ENCODE measurements at regions of chr1 and their contacts with region 1.

Region 1: DNA sequence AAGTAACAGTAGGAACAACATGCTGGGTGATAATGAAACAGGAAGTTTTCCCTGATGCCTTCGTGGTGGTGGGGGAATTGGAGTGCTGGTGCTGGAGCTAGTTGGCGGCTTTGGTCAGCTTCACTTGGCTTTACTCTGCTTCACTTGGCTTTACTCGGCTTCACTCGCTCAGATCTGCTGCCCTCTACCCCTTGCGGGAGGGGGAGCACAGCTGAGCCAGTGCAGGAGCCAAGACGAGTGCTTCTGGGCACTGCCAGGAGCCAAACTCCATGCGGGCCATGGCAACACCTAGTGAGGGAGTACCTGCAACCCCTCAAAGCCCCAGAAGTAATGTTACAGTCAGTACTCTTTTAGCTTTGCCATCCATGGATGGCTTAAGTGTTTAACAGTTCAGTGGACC is 10.6 kb upstream of the PRKACB start:
- DNase-seq: no peak
- ATAC-seq: no peak; the same call in 2 of the 3 replicates
- H3K4me3 ChIP-seq: no peak overlapping the region
- H3K27ac ChIP-seq: no peak overlapping the region
- H3K4me1 ChIP-seq: no peaks in the 10 kb centered on the region
- H3K27me3 ChIP-seq: no peaks in the 10 kb centered on the region
- CTCF ChIP-seq: no peak
- EP300 ChIP-seq: no peak
- POLR2A ChIP-seq: no peak
- RAD21 ChIP-seq: no peak

Region 2: DNA sequence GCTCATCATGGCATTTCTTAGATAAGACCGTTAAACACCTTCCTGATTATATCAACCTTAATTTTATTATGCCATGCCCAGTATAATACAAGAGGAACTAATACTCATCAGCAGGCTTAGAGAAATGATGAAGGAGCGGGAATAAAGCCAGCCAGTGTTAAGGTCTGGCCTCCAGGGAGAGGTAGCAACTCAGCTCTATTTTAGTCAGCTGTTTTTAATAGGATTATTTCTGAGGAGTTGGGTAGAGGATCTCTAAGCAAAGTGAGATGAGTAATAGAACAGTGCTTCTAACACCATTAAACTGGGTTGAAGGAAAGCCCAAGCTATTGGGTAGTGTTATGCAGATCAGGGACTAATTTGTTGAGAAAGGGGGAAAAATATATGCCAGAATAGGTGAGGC is 1056.1 kb before region 1 on chr1:
- CTCF ChIA-PET with region 1: no interaction called
- POLR2A ChIA-PET with region 1: no interaction called
- in situ Hi-C with region 1: loop called (anchors 10 kb)
- intact Hi-C with region 1: no loop called
- DNase-seq: no peak
- ATAC-seq: no peak
- H3K4me3 ChIP-seq: no peak overlapping the region
- H3K27ac ChIP-seq: no peak overlapping the region
- H3K4me1 ChIP-seq: no peaks in the 10 kb centered on the region
- H3K27me3 ChIP-seq: no peaks in the 10 kb centered on the region
- CTCF ChIP-seq: no peak
- EP300 ChIP-seq: no peak
- POLR2A ChIP-seq: no peak
- RAD21 ChIP-seq: no peak